AG04449 (cell line): ENCODE measurements at regions of chr16 and their contacts with region 1.

Region 1: GRCh38 chr16:2439598-2439997 is 10.4 kb downstream of the CCNF start:
- DNase-seq: no peak
- H3K4me3 ChIP-seq: no peak overlapping the region
- CTCF ChIP-seq: no peak

Region 2: GRCh38 chr16:2429034-2429770 is 10.4 kb before region 1 on chr16 and contains the start of gene CCNF:
- CTCF ChIA-PET with region 1: interaction called, 13 read pairs
- POLR2A ChIA-PET with region 1: interaction called, 4 read pairs
- DNase-seq: peak; percentile 40
- H3K4me3 ChIP-seq: peak within 1 kb of the TSS; percentile 81
- CTCF ChIP-seq: peak; percentile 3

Region 3: DNA sequence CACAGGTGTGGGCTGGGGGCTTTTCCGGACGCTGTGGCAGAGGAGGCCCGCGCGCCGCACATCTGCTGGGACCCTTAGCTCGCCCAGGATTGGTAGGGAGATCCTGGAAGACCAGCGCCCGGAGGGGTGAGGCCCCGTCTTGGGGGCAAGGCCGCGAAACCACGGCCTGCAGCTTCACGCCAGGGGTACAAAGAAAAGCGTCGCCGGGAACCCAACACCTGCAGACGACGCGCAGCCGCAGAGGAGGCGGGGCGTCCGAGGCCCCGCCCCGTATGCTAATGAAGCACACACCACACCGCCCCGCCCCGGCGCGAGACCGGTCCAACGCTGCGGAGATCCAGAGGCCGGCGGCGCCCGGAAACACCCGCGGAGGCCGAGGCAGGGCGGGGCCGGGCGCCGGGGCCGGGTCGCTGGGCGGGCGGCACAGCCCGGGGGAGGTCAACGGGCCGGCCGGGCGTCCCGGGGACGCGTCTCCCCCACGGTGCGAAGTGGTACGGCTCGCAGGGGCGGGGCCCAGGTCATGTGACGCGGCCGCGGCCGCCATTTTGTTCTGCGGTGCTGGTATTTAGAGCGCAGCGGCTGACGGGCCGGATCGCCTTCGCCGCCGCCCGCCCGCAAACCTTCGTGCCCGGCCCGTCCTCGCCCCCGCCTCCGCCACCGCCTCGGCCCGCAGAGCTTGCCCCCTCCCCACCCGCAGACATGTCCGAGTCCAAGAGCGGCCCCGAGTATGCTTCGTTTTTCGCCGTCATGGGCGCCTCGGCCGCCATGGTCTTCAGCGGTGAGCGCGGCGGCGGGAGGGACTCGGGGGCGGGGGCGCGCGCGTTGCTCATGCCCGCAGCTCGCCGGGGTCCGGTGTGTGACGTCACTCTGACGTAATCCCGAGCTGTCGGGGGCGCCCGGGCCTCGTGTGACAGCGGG is 74.1 kb after region 1 on chr16 and contains the start of gene ATP6V0C:
- CTCF ChIA-PET with region 1: no interaction called
- POLR2A ChIA-PET with region 1: no interaction called
- DNase-seq: no peak
- H3K4me3 ChIP-seq: peak within 1 kb of the TSS; percentile 83
- CTCF ChIP-seq: no peak

Region 4: DNA sequence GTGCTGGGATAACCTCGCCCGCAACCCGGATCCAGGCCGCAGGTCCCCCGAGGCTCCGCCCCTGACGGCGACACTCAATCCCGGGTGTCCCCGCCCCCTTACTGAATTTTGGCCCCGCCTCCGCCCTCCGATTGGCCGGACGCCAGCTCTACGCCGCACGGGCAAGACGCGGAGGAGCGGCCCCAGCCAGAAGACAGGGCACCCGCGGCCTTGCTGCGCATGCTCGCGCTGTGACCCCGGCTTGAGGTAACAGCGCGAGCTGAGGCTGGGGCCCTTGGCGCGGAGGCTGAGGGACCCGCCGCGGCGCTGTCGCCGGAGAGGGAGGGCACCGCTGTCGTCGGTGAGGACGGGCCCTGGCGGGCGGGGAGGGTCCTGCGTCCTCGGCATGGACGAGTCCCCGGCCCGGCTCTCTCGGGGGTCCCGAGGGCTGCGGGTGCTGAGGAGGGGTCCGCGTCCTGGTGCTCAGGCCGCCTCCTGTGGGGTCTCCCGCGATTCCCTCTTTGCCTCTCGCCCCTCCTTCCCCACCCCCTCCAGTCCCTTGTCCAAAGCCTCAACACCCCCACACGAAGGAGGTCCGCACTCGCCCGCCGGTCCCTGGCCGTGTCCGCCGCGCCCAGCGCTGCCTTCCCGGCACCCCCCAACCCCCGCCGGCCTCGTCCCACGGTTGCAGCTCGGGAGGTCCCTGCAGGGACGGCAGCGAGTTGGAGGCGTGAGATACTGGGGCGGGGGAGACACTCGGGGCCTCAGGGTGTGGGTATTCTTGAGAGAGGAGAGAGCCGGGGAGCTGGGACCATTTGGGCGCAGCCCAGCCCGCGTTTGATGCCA is 443.6 kb after region 1 on chr16 and contains the start of gene FLYWCH2:
- CTCF ChIA-PET with region 1: no interaction called
- POLR2A ChIA-PET with region 1: no interaction called
- DNase-seq: peak; percentile 63
- H3K4me3 ChIP-seq: peak within 1 kb of the TSS; percentile 83
- CTCF ChIP-seq: no peak